PC-9 (cell line): ENCODE measurements at regions of chr2 and their contacts with region 1.

Region 1: DNA sequence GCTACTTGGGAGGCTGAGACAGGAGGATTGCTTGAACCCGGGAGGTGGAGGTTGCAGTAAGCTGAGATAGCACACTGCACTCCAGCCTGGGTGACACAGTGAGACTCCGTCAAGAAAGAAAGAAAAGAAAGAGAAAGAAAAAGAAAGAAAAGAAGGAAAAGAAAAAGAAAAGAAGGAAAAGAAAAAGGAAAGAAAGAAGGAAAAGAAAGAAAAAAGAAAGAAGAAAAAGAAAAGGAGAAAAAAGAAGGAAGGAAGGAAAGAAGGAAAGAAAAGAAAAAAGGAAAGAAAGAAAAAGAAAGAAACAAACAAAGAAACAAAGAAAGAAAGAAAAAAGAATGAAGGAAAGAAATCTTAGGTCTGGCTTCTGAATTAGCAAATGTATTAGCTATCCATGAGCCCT is 150.4 kb downstream of the TMEM163 start:
- DNase-seq: no peak
- H3K4me3 ChIP-seq: no peak overlapping the region
- H3K27ac ChIP-seq: no peak overlapping the region
- H3K4me1 ChIP-seq: no peaks in the 10 kb centered on the region
- H3K27me3 ChIP-seq: no peaks in the 10 kb centered on the region
- CTCF ChIP-seq: no peak

Region 2: DNA sequence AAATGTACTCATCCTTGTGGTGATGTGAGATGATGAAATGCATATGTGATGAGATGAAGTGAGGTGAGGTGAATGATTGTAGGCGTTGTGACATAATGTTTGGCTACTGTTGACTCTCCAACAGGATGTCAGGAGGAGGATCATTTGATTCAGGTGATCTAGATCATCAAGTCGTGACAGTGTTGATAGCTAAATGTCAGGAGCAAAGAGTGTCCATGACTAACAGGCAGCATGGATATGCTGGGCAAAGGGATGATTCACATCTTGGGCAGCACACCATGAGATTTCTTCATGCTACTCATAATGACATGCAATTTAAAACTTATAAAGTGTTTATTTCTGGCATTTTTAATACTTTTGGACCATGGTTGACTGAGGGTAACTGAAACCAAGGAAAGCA is 1133.0 kb after region 1 on chr2:
- CTCF ChIA-PET with region 1: no interaction called
- POLR2A ChIA-PET with region 1: interaction called, 11 read pairs
- intact Hi-C with region 1: no loop called
- DNase-seq: no peak
- H3K4me3 ChIP-seq: no peak overlapping the region
- H3K27ac ChIP-seq: no peak overlapping the region
- H3K4me1 ChIP-seq: no peaks in the 10 kb centered on the region
- H3K27me3 ChIP-seq: no peaks in the 10 kb centered on the region
- CTCF ChIP-seq: no peak